Naive thymus-derived CD4-positive, alpha-beta T cell (primary cell): ENCODE measurements at regions of chr3 and their contacts with region 1.

Region 1: GRCh38 chr3:69104996-69105719 is 17.2 kb downstream of the LMOD3 start:
- DNase-seq: no peak
- ATAC-seq: no peak
- H3K4me3 ChIP-seq: no peak overlapping the region
- H3K4me3 Mint-ChIP-seq: no peak overlapping the region
- H3K27ac ChIP-seq: no peak overlapping the region
- H3K27ac Mint-ChIP-seq: peak overlapping the region in 3 of 9 donors; percentile 34 to 66 (median 49)
- H3K4me1 ChIP-seq: peaks cover 4 to 10% of the 10 kb centered on the region in 2 donors
- H3K4me1 Mint-ChIP-seq: peaks cover 16 to 55% (median 39%) of the 10 kb centered on the region in 7 donors
- H3K27me3 ChIP-seq: no peaks in the 10 kb centered on the region
- H3K27me3 Mint-ChIP-seq: no peaks in the 10 kb centered on the region

Region 2: DNA sequence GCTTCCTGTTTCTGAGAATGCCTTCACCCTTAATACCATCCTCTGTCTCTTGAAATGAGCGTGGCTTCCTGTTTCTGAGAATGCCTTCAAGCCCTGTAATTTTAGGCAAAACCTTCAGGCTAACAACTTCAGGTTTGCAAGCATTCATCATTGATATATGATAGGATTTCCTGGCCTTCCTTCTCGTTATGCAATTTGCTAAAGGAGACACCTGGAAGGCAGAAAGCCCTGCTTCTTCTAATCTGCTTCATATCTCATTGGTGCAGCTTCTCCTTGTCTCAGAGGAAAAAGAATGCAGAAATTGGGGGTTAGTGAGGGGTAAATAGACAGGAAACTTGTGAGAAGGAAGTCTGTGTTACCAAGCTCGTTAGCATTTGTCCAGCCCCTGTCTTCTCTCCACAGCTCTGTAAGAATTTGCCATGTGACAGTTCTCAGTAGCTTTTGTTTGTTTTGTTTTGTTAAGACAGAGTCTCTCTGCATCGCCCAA is 13.1 kb before region 1 on chr3:
- CTCF ChIA-PET with region 1: no interaction called
- POLR2A ChIA-PET with region 1: interaction called, 7 read pairs
- intact Hi-C with region 1: loop called in 1 of 2 experiments (anchors 1 kb)
- DNase-seq: peak in 7 of 9 donors; percentile 46 to 67 (median 60)
- ATAC-seq: peak; percentile 77
- H3K4me3 ChIP-seq: peak overlapping the region; percentile 40
- H3K4me3 Mint-ChIP-seq: peak overlapping the region; percentile 70 to 94 (median 79)
- H3K27ac ChIP-seq: peak overlapping the region; percentile 76
- H3K27ac Mint-ChIP-seq: peak overlapping the region; percentile 90 to 98 (median 93)
- H3K4me1 ChIP-seq: peaks cover 77 to 83% of the 10 kb centered on the region in 2 donors
- H3K4me1 Mint-ChIP-seq: peaks cover 62 to 93% (median 85%) of the 10 kb centered on the region in 7 donors
- H3K27me3 ChIP-seq: no peaks in the 10 kb centered on the region
- H3K27me3 Mint-ChIP-seq: no peaks in the 10 kb centered on the region

Region 3: DNA sequence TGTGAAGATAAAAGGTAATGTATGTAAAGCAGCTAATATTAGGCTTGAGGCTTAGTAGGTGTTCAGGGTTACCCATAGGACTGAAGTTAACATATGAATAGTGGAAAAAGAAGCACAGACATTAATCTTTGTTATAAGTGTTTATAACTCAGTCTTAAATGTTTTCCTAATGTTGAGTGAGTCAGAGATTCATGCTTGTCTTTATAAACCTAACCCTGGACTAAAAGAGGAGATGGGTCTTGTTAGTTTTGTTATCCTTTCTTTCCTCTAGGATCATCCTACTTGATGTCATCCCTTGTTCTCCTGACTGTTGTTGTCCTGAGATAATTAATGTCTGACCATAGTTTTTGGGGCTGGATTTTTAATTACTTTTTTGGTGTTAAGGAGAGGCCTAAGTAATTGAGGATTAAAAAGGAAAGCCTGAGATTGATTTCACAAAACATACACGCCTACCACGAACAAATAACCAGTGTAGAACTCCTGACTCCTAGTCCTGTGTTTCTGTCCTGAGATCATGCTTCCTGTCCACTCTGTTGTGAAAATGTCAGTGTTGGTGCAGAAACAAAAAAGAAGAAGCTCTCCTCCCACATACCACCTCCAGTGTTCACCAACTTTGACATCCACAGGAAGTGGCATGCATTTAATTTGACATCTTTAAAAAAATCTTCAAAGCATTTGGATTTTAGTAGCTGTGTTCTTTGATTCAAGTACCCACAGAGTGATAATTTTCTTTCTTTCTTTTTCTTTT is 642.5 kb after region 1 on chr3:
- CTCF ChIA-PET with region 1: no interaction called
- POLR2A ChIA-PET with region 1: no interaction called
- intact Hi-C with region 1: no loop called
- DNase-seq: no peak
- ATAC-seq: peak; percentile 51
- H3K4me3 ChIP-seq: no peak overlapping the region
- H3K4me3 Mint-ChIP-seq: no peak overlapping the region
- H3K27ac ChIP-seq: no peak overlapping the region
- H3K27ac Mint-ChIP-seq: no peak overlapping the region
- H3K4me1 ChIP-seq: no peaks in the 10 kb centered on the region
- H3K4me1 Mint-ChIP-seq: peaks cover 0 to 8% (median 5%) of the 10 kb centered on the region in 7 donors
- H3K27me3 ChIP-seq: peaks cover 0 to 1% of the 10 kb centered on the region in 2 donors
- H3K27me3 Mint-ChIP-seq: peaks cover 3 to 25% (median 8%) of the 10 kb centered on the region in 5 donors